Panc1 (cell line): ENCODE measurements at regions of chr13 and their contacts with region 1.

Region 1: GRCh38 chr13:44605275-44605674 is 29.1 kb upstream of the TSC22D1 start:
- DNase-seq: no peak
- ATAC-seq: no peak
- H3K4me3 ChIP-seq: no peak overlapping the region
- H3K27ac ChIP-seq: no peak overlapping the region
- H3K4me1 ChIP-seq: no peaks in the 10 kb centered on the region
- H3K27me3 ChIP-seq: no peaks in the 10 kb centered on the region
- CTCF ChIP-seq: no peak

Region 2: GRCh38 chr13:43650882-43651281 is 954.4 kb before region 1 on chr13:
- CTCF ChIA-PET with region 1: no interaction called
- POLR2A ChIA-PET with region 1: no interaction called
- in situ Hi-C with region 1: no loop called
- intact Hi-C with region 1: no loop called
- DNase-seq: no peak
- ATAC-seq: no peak
- H3K4me3 ChIP-seq: no peak overlapping the region
- H3K27ac ChIP-seq: no peak overlapping the region
- H3K4me1 ChIP-seq: no peaks in the 10 kb centered on the region
- H3K27me3 ChIP-seq: no peaks in the 10 kb centered on the region
- CTCF ChIP-seq: no peak

Region 3: GRCh38 chr13:44591316-44591715 is 14.0 kb before region 1 on chr13:
- CTCF ChIA-PET with region 1: no interaction called
- POLR2A ChIA-PET with region 1: interaction called, 11 read pairs
- in situ Hi-C with region 1: no loop called
- intact Hi-C with region 1: no loop called
- DNase-seq: no peak
- ATAC-seq: no peak
- H3K4me3 ChIP-seq: no peak overlapping the region
- H3K27ac ChIP-seq: no peak overlapping the region
- H3K4me1 ChIP-seq: no peaks in the 10 kb centered on the region
- H3K27me3 ChIP-seq: no peaks in the 10 kb centered on the region
- CTCF ChIP-seq: no peak